ENCODE measurements at regions of chr6 and their contacts with region 1.

Region 1: GRCh38 chr6:130293800-130294199 is 71.0 kb upstream of the SAMD3 start:
- DNase-seq: peak; percentile 77
- ATAC-seq: peak; percentile 99
- H3K4me3 ChIP-seq: no peak overlapping the region
- H3K27ac ChIP-seq: no peak overlapping the region
- H3K4me1 ChIP-seq: no peaks in the 10 kb centered on the region
- H3K27me3 ChIP-seq: no peaks in the 10 kb centered on the region
- CTCF ChIP-seq: peak; percentile 68
- POLR2A ChIP-seq: no peak
- RAD21 ChIP-seq: peak; percentile 74

Region 2: DNA sequence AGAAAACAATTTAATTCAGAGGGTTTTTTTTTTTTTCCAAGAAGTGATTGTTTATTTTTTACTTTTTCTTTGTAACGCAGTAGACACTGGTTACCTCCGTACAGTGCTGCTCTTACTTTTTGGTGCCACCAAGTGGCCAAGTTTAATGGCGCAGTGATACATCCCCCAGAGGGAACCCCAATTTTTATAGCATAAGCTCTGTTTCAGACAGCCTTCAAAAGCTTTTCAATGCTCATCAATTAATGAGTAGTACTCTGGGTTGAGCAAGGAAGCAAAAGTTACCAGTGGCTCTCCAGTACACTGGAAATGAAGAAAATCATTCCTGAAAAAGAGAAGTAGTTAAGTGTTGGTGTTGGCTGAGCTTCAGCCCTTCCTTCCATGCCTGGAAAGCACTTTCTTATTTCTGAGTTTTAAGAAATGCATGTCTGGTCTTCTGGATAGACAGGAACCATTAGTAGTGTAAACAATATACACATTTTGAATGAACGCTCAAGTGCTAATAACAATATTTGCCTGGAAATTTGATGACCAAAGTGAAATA is 404.3 kb after region 1 on chr6:
- CTCF ChIA-PET with region 1: interaction called, 4 read pairs
- POLR2A ChIA-PET with region 1: no interaction called
- dilution Hi-C with region 1: no loop called
- in situ Hi-C with region 1: no loop called
- intact Hi-C with region 1: loop called (anchors 10 kb)
- DNase-seq: peak; percentile 66
- ATAC-seq: peak; percentile 96
- H3K4me3 ChIP-seq: no peak overlapping the region
- H3K27ac ChIP-seq: no peak overlapping the region
- H3K4me1 ChIP-seq: no peaks in the 10 kb centered on the region; the same call in 1 of the 2 replicates
- H3K27me3 ChIP-seq: peaks cover 4% of the 10 kb centered on the region
- CTCF ChIP-seq: peak; percentile 89
- POLR2A ChIP-seq: 0 out of 2 replicates have a peak, but pooled peaks have one; percentile 45
- RAD21 ChIP-seq: peak; percentile 93

Region 3: DNA sequence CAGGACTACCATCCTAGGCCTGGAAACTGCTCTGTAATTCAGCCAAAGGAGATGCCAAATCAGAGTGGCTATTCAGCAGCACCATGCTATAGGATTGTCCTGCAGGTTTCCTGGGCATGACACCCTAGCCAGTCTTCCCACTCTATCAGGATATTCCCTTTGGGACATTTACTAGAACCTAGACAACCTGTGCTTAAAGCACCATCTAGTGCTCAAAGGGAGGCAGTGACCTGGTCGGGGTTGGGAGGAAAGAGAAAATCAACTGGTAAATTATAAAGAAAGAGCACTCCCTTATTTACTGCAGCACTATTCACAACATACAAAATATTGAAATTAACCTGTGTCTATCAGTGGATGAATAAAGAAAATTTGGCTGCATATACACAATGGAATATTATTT is 466.2 kb after region 1 on chr6:
- CTCF ChIA-PET with region 1: no interaction called
- POLR2A ChIA-PET with region 1: no interaction called
- dilution Hi-C with region 1: no loop called
- in situ Hi-C with region 1: no loop called
- intact Hi-C with region 1: loop called (anchors 1 kb)
- DNase-seq: peak; percentile 61
- ATAC-seq: peak; percentile 83
- H3K4me3 ChIP-seq: no peak overlapping the region
- H3K27ac ChIP-seq: no peak overlapping the region
- H3K4me1 ChIP-seq: no peaks in the 10 kb centered on the region
- H3K27me3 ChIP-seq: peaks cover 8% of the 10 kb centered on the region
- CTCF ChIP-seq: peak; percentile 85
- POLR2A ChIP-seq: no peak
- RAD21 ChIP-seq: peak; percentile 88

Region 4: DNA sequence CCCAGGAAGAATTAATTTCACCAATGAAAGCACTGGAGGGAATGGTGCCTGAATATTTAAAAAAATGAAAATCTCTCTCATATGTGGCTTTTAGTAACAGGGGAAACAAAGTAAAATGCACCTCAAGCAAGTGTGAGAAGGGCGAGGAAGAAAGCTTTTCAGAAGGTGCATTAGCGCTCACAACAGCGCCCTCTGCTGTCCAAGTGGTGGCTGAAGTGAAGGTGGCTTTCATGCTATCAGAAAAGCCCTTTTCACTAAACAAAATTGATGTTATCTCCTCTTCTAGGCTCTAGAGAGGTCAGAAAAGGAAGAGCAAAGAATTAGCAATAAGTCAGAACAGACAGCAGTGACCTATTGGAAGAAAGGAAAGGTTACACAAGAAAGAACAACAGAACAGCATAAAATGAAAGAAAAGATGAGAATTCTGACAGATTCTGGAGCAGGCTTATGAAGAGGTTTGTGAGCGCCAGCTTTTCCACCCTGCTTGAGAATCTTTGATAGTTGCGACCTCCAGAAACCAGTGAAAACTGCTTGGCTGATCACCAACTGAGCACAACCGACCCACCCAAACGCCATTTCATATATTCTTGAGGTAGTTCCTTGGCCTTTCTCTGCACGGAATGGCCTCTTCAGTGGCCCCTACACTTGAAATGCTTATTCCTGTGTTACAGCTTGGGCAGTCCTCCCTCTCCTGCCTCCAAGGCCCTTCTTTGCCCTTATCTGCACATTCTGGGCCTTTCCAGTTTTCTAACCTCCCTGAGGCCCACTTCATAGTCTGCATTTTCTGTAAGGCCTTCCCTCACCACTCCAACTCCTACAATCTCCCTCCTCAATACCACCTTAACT is 578.7 kb after region 1 on chr6:
- CTCF ChIA-PET with region 1: no interaction called
- POLR2A ChIA-PET with region 1: no interaction called
- dilution Hi-C with region 1: no loop called
- in situ Hi-C with region 1: no loop called
- intact Hi-C with region 1: no loop called
- DNase-seq: peak; percentile 44
- ATAC-seq: peak; percentile 67
- H3K4me3 ChIP-seq: no peak overlapping the region
- H3K27ac ChIP-seq: no peak overlapping the region
- H3K4me1 ChIP-seq: no peaks in the 10 kb centered on the region
- H3K27me3 ChIP-seq: no peaks in the 10 kb centered on the region
- CTCF ChIP-seq: peak; percentile 76
- POLR2A ChIP-seq: no peak
- RAD21 ChIP-seq: peak; percentile 64